ENCODE measurements at regions of chr1 and their contacts with region 1.

Region 1: DNA sequence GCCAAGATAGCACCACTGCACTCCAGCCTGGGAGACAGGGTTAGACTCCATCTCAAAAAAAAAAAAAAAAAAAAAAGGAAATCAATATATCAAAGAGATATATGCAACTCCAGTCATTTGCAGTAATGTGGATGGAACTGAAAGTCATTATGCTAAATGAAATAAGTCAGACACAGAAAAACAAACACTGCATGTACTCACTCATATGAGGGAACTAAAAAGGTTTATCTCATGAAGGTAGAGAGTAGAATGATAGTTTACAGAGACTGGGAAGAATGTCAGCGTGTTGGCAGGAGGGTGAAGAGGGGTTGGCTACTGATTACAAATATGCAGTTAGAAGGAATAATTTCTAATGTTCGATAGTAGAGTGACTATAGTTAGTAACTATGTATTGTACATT is 13.2 kb downstream of the HSD11B1 start:
- DNase-seq: no peak
- H3K4me3 Mint-ChIP-seq: no peak overlapping the region
- H3K27ac Mint-ChIP-seq: peak overlapping the region; percentile 92
- H3K4me1 Mint-ChIP-seq: peaks cover 66% of the 10 kb centered on the region
- H3K27me3 Mint-ChIP-seq: no peaks in the 10 kb centered on the region

Region 2: DNA sequence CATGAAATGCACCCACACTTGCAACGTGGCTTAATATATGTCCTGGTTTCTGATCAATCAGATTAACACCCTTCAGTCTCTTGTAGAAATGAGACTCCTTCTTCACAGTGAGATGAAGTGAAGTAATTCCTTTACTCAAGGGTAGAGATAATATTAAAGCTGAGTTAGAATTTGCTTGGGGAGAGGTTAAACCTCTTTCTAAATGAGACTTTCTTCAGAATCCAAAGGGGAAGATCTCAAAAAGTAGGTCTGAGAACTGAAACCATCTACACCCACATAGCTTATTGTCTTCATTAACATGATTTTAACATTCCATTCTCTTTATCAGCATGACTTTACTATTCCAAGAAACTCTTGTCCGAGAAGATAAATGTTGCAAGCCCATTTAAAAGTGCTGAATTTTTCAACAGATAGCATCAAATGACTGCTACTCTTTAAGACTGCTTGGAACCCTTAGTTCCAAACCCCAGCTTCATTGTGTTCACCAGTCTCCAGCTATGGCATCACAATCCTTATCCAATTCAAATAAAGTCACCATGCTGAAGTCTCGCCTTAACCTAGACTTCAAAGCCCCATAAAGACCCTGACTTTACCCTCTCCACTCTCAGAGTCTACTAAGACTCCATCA is 18.8 kb after region 1 on chr1:
- intact Hi-C with region 1: loop called (anchors 1 kb)
- DNase-seq: no peak
- H3K4me3 Mint-ChIP-seq: no peak overlapping the region
- H3K27ac Mint-ChIP-seq: peak overlapping the region; percentile 93
- H3K4me1 Mint-ChIP-seq: peaks cover 54% of the 10 kb centered on the region
- H3K27me3 Mint-ChIP-seq: no peaks in the 10 kb centered on the region

Measured in activated T-helper 2 cell treated with anti-CD3 and anti-CD28 coated beads, Interferon-gamma antibody, Interleukin-2, Interleukin-4, amounts not matched to agents 10 μg/mL and 5 μg/mL and 100 μg/mL, durations not matched to agents 14 hours and 24 hours and 36 hours (primary cell).